ENCODE measurements at regions of chr20 and their contacts with region 1.

Region 1: GRCh38 chr20:45946149-45946970 is 11.9 kb downstream of the PCIF1 start:
- DNase-seq: peak; percentile 60
- ATAC-seq: peak; percentile 52
- H3K4me3 Mint-ChIP-seq: no peak overlapping the region
- H3K27ac Mint-ChIP-seq: peak overlapping the region; percentile 65
- H3K4me1 Mint-ChIP-seq: peaks cover 13% of the 10 kb centered on the region
- H3K27me3 Mint-ChIP-seq: no peaks in the 10 kb centered on the region
- CTCF ChIP-seq: no peak

Region 2: GRCh38 chr20:45957081-45957941 is 11.0 kb after region 1 on chr20:
- CTCF ChIA-PET with region 1: interaction called, 3 read pairs
- POLR2A ChIA-PET with region 1: interaction called, 119 read pairs
- intact Hi-C with region 1: no loop called
- DNase-seq: no peak
- ATAC-seq: no peak
- H3K4me3 Mint-ChIP-seq: no peak overlapping the region
- H3K27ac Mint-ChIP-seq: no peak overlapping the region
- H3K4me1 Mint-ChIP-seq: no peaks in the 10 kb centered on the region
- H3K27me3 Mint-ChIP-seq: no peaks in the 10 kb centered on the region
- CTCF ChIP-seq: no peak

Region 3: GRCh38 chr20:45963059-45964005 is 17.0 kb after region 1 on chr20:
- CTCF ChIA-PET with region 1: interaction called, 74 read pairs
- POLR2A ChIA-PET with region 1: interaction called, 43 read pairs
- intact Hi-C with region 1: no loop called
- DNase-seq: no peak
- ATAC-seq: peak; percentile 58
- H3K4me3 Mint-ChIP-seq: no peak overlapping the region
- H3K27ac Mint-ChIP-seq: no peak overlapping the region
- H3K4me1 Mint-ChIP-seq: no peaks in the 10 kb centered on the region
- H3K27me3 Mint-ChIP-seq: no peaks in the 10 kb centered on the region
- CTCF ChIP-seq: no peak

Region 4: DNA sequence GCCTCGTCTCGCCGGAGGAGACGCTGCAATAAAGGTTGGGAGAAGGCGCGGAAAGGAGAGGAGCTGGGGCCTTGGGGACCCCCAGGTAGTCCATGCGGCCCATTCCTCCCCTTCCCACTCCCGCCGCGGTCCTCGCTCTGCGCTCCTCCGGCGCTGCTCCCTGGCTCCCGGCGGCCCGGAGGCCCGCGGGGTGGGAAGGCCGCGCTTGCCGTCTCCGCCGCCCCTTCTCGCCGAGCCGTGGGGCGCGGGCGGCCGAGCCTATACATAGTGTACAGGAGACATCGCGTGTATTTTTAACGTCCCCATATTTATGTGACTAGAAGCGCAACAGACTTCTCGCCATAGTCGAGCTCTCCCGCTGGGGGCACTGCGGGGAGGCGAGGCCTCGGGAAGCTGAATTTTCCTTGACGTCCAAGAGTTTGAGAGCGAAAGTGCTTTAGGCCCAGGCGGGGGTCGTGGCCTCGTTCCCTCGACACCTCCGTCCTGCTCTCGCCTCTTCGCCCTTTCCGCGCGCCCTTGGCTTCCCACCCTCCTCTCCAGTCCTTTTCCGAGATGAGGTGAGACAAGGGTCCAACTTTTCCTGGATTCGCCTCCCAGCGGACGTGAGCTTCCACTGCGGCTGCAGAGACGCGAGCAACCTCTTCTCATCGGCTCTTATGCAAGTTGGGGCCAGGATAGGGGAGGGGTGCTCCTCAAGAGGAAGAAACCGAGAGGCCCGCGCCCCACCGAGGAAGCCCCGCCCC is 111.7 kb after region 1 on chr20:
- CTCF ChIA-PET with region 1: no interaction called
- POLR2A ChIA-PET with region 1: no interaction called
- intact Hi-C with region 1: no loop called
- DNase-seq: peak; percentile 33
- ATAC-seq: no peak
- H3K4me3 Mint-ChIP-seq: no peak overlapping the region
- H3K27ac Mint-ChIP-seq: no peak overlapping the region
- H3K4me1 Mint-ChIP-seq: peaks cover 50% of the 10 kb centered on the region
- H3K27me3 Mint-ChIP-seq: peaks cover 34% of the 10 kb centered on the region
- CTCF ChIP-seq: no peak

Measured in activated CD8-positive, alpha-beta T cell treated with anti-CD3 and anti-CD28 coated beads for 36 hours (primary cell).